Activated CD4-positive, alpha-beta memory T cell treated with anti-CD3 and anti-CD28 coated beads for 36 hours (primary cell): ENCODE measurements at regions of chr1 and their contacts with region 1.

Region 1: DNA sequence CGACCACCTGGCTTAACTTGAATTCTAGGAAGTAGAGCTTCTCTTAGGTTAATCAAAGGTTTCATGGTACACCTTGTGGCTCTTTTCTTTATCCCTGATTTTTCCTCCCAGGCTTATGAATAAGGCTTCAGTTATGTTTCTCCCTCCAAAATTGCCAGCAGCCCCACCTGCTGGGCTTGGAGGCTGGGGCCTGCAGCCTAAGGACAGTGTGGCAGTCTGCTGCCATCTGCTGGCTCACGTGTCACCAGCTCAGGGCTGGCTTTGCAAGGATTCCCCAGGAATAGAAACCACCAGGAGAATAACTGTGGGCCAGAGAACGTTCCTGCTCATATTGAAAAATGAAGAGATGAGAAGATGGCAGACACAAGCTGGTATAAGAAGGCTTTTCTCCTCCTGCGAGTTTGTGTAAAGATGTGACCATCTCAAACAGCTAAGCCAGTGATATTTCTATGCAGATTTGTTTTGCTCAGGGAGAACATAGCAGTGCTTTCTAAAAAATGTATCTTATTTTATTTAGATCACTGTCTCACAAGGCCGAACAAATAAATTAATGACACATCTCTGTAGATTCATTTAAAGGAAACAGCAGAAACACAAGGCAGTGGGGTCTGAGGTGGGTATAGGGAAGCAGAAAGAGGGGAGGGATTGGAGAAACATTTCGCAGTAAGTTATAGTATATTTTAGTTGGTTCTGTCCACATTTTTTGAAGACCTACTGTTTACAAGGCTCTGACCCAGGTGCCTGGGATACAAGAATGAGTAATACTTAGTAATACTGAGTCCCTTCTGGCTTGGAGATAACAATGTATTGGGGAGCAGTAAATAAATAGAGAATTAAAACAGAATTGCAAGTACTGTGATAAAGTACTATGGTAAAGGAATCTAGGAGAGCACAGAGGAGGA is 291.1 kb upstream of the SGIP1 start:
- DNase-seq: peak; percentile 84
- H3K4me3 Mint-ChIP-seq: no peak overlapping the region
- H3K27ac Mint-ChIP-seq: no peak overlapping the region
- H3K4me1 Mint-ChIP-seq: no peaks in the 10 kb centered on the region
- H3K27me3 Mint-ChIP-seq: peaks cover 6% of the 10 kb centered on the region

Region 2: GRCh38 chr1:65717815-65718454 is 525.0 kb before region 1 on chr1:
- CTCF ChIA-PET with region 1: interaction called, 11 read pairs
- POLR2A ChIA-PET with region 1: no interaction called
- intact Hi-C with region 1: loop called (anchors 2 kb)
- DNase-seq: peak; percentile 15
- H3K4me3 Mint-ChIP-seq: no peak overlapping the region
- H3K27ac Mint-ChIP-seq: no peak overlapping the region
- H3K4me1 Mint-ChIP-seq: no peaks in the 10 kb centered on the region
- H3K27me3 Mint-ChIP-seq: peaks cover 6% of the 10 kb centered on the region

Region 3: GRCh38 chr1:66137235-66137634 is 105.7 kb before region 1 on chr1:
- CTCF ChIA-PET with region 1: interaction called, 4 read pairs
- POLR2A ChIA-PET with region 1: no interaction called
- intact Hi-C with region 1: loop called (anchors 2 kb)
- DNase-seq: no peak
- H3K4me3 Mint-ChIP-seq: no peak overlapping the region
- H3K27ac Mint-ChIP-seq: no peak overlapping the region
- H3K4me1 Mint-ChIP-seq: peaks cover 6% of the 10 kb centered on the region
- H3K27me3 Mint-ChIP-seq: peaks cover 3% of the 10 kb centered on the region

Region 4: GRCh38 chr1:66253330-66253921 is 10.5 kb after region 1 on chr1:
- CTCF ChIA-PET with region 1: interaction called, 28 read pairs
- POLR2A ChIA-PET with region 1: interaction called, 10 read pairs
- intact Hi-C with region 1: loop called (anchors 1 kb)
- DNase-seq: no peak
- H3K4me3 Mint-ChIP-seq: no peak overlapping the region
- H3K27ac Mint-ChIP-seq: no peak overlapping the region
- H3K4me1 Mint-ChIP-seq: peaks cover 51% of the 10 kb centered on the region
- H3K27me3 Mint-ChIP-seq: no peaks in the 10 kb centered on the region

Region 5: DNA sequence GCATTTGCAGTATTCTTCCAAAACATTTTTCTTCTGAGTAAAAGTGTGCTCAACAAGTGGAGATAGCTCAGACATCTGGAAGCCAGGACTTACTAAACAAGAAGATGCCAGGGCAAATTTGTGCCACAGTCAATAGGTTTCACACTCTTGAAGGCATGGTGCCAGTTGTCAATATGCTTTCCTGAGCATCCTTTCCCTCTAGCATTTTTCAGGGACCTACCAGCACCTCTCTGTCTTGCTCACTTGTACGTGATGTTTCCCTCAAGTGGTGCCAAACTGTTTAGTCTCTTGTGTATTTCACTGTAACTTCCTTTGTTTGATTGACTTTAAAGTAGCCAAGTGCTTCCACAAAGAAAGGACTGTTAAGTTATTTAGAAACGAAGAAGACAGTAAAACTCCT is 97.0 kb after region 1 on chr1:
- CTCF ChIA-PET with region 1: interaction called, 22 read pairs
- POLR2A ChIA-PET with region 1: interaction called, 6 read pairs
- intact Hi-C with region 1: no loop called
- DNase-seq: no peak
- H3K4me3 Mint-ChIP-seq: peak overlapping the region; percentile 72
- H3K27ac Mint-ChIP-seq: peak overlapping the region; percentile 90
- H3K4me1 Mint-ChIP-seq: peaks cover 74% of the 10 kb centered on the region
- H3K27me3 Mint-ChIP-seq: no peaks in the 10 kb centered on the region

Region 6: GRCh38 chr1:66436378-66437145 is 193.7 kb after region 1 on chr1:
- CTCF ChIA-PET with region 1: interaction called, 476 read pairs
- POLR2A ChIA-PET with region 1: interaction called, 5 read pairs
- intact Hi-C with region 1: loop called (anchors 1 kb)
- DNase-seq: peak; percentile 81
- H3K4me3 Mint-ChIP-seq: no peak overlapping the region
- H3K27ac Mint-ChIP-seq: peak overlapping the region; percentile 39
- H3K4me1 Mint-ChIP-seq: peaks cover 39% of the 10 kb centered on the region
- H3K27me3 Mint-ChIP-seq: no peaks in the 10 kb centered on the region